ENCODE measurements at regions of chr3 and their contacts with region 1.

Region 1: DNA sequence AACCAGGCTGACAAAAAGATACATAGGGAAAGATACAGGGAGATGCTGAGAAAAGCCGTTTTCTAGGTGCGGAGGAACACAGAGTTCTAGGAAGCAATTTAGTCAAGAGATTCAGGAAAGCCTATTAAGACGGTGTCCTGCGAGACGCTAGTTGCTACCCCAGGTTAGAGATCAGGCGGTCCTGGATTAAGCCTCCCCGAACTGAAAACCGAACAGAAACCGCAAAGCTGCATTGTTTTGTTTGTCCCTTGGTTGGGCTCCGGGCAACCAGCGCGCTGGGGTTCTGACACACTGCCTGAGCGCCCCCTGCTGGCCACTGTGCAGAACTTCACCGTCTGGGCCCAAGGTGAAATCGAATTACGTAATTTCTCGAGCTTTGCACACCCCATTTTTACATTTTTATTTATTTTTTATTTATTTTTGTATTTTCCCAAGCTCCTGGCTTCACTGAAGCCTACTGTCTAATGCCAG is 37.3 kb upstream of the NDUFB4 start:
- DNase-seq: peak; percentile 90 to 97 (median 93)
- H3K4me3 ChIP-seq: peak overlapping the region in 3 of 4 donors; percentile 12 to 50 (median 48)
- H3K27ac ChIP-seq: peak overlapping the region; percentile 85 to 99 (median 95)
- H3K4me1 ChIP-seq: peaks cover 46 to 70% of the 10 kb centered on the region in 2 donors
- H3K27me3 ChIP-seq: no peaks in the 10 kb centered on the region
- CTCF ChIP-seq: peak; percentile 99 to 100 (median 100)
- POLR2A ChIP-seq: peak in 1 of 2 donors; percentile 47

Region 2: DNA sequence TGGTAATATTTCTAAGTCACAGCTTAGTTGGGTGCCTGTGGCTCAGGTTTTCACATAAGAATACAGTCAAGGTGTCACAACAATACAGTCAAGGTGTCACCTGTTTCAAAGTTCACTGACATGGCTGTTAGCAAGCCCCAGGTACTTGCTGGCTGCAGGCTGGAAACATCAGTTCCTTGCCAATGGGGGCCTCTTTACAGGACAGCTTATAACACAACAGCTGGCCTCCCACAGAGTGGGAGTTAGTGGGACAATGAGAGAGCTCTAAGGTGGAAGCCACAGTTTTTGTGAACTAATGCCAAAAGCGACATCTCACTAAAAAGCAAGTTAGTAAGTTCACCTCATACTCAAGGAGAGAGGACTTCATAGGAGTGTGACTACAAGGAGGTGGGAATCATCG is 319.2 kb before region 1 on chr3:
- intact Hi-C with region 1: loop called (anchors 5 kb)
- DNase-seq: no peak
- H3K4me3 ChIP-seq: no peak overlapping the region
- H3K27ac ChIP-seq: no peak overlapping the region
- H3K4me1 ChIP-seq: no peaks in the 10 kb centered on the region
- H3K27me3 ChIP-seq: no peaks in the 10 kb centered on the region
- CTCF ChIP-seq: no peak
- POLR2A ChIP-seq: no peak

Region 3: DNA sequence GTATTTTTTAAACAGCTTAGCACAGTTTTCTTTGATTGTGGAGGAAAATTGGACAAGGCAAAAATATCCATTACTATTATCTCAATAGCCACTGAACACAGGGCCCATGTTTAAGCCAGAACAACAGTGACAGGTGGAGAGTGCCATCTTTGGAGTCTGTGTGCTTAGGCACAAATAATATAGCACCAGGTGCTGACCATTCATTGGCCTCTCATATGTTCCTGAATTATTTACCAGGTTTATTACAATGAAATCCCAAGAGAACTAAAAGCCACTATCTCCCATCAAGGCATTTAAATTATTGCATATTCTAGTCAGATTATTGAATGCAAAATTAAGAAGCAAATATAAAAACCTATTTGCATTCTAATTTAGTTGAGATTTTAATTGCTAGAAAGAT is 313.4 kb before region 1 on chr3:
- intact Hi-C with region 1: loop called (anchors 5 kb)
- DNase-seq: no peak
- H3K4me3 ChIP-seq: no peak overlapping the region
- H3K27ac ChIP-seq: no peak overlapping the region
- H3K4me1 ChIP-seq: no peaks in the 10 kb centered on the region
- H3K27me3 ChIP-seq: no peaks in the 10 kb centered on the region
- CTCF ChIP-seq: no peak
- POLR2A ChIP-seq: no peak

Region 4: GRCh38 chr3:120417272-120417911 is 141.4 kb before region 1 on chr3:
- intact Hi-C with region 1: loop called (anchors 5 kb)
- DNase-seq: peak; percentile 95 to 99 (median 97)
- H3K4me3 ChIP-seq: peak overlapping the region in 1 of 4 donors; percentile 34
- H3K27ac ChIP-seq: peak overlapping the region; percentile 74 to 93 (median 80)
- H3K4me1 ChIP-seq: peaks cover 54 to 55% of the 10 kb centered on the region in 2 donors
- H3K27me3 ChIP-seq: no peaks in the 10 kb centered on the region
- CTCF ChIP-seq: peak; percentile 80 to 96 (median 92)
- POLR2A ChIP-seq: peak in 1 of 2 donors; percentile 79

Region 5: DNA sequence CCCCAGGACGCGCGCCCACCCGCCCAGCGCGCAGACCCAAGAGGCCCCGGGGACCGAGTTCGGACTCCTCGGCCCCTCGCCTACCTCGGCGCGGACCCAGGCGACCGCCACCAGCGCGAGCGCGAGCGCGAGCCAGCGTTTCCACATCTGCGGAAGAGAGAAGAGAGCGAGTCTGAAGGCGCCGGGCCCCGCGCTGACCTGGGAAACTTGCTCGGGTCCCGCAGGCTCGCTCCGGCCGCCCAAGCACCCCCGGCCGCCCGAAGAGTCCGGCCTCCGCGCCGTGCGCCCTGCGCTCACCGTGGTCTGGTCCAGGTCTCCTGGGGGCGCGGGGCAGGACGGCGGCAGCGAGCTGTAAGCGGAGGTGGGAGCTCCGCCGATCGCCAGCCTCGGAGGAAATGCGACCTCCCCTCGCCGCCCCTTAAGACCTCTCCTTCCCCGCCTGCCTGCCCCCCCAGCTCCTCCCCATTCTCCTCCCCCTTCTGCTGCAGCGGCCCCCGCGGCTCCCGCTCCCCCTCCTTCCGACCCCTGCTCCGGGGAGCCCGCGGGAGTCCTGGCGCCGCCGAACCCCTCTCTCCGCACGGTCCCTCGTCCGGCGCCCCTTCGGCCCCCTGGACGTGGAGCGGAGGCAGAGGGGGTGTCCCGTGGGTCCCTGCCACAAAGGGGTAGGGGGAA is 108.1 kb before region 1 on chr3 and contains the start of gene FSTL1:
- intact Hi-C with region 1: loop called in 1 of 2 experiments (anchors 5 kb)
- DNase-seq: peak; percentile 60 to 84 (median 66)
- H3K4me3 ChIP-seq: peak within 1 kb of the TSS; percentile 43 to 98 (median 82)
- H3K27ac ChIP-seq: peak within 1 kb of the TSS; percentile 67 to 91 (median 86)
- H3K4me1 ChIP-seq: peaks cover 24 to 41% of the 10 kb centered on the region in 2 donors
- H3K27me3 ChIP-seq: no peaks in the 10 kb centered on the region
- CTCF ChIP-seq: no peak
- POLR2A ChIP-seq: peak; percentile 62 to 73
- total RNA-seq, gene FSTL1: 198 to 625 (median 350) TPM

Region 6: DNA sequence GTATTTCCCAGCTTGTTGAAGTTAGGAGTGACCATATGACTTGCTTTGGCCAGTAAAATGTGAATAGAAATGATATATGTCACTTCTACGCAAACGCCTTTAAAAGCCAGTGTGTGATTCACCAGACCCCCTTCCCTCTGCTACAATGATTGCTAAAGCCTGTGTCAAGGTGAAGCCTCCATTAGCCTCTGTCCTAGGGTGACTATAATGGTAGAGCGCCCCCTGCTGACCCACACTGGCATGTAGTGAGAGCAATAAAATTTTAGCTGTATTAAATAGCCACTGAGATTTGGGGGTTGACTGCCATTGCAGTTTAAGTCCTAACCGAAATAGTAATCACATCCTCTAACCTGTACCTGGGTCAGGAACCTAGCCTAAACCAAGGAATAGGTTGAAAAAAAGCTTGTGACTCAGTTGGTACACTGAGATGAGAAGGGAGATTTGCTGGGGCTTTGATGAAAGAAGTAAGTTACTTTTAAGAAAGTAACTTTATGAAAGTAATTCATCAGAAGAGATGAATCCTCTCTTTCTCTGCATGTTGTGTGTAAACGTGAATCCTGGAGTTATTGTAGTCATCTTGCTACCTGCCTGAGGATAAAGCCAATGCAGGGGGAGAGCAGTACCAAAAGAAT is 236.3 kb after region 1 on chr3:
- intact Hi-C with region 1: loop called in 1 of 2 experiments (anchors 5 kb)
- DNase-seq: peak; percentile 90 to 96 (median 92)
- H3K4me3 ChIP-seq: no peak overlapping the region
- H3K27ac ChIP-seq: peak overlapping the region in 1 of 5 donors; percentile 4
- H3K4me1 ChIP-seq: no peaks in the 10 kb centered on the region
- H3K27me3 ChIP-seq: no peaks in the 10 kb centered on the region
- CTCF ChIP-seq: peak; percentile 90 to 96 (median 94)
- POLR2A ChIP-seq: no peak

Measured in adrenal gland (tissue), 19 donors.